ENCODE measurements at regions of chr3 and their contacts with region 1.

Region 1: GRCh38 chr3:120245386-120245785 is 39.6 kb downstream of the GPR156 start:
- DNase-seq: no peak
- H3K4me3 ChIP-seq: no peak overlapping the region
- H3K27ac ChIP-seq: no peak overlapping the region
- H3K4me1 ChIP-seq: no peaks in the 10 kb centered on the region
- H3K27me3 ChIP-seq: no peaks in the 10 kb centered on the region
- CTCF ChIP-seq: no peak

Region 2: GRCh38 chr3:120302361-120302760 is 57.0 kb after region 1 on chr3:
- CTCF ChIA-PET with region 1: no interaction called
- dilution Hi-C with region 1: no loop called
- in situ Hi-C with region 1: no loop called
- intact Hi-C with region 1: loop called (anchors 2 kb)
- DNase-seq: no peak
- H3K4me3 ChIP-seq: no peak overlapping the region
- H3K27ac ChIP-seq: no peak overlapping the region
- H3K4me1 ChIP-seq: no peaks in the 10 kb centered on the region
- H3K27me3 ChIP-seq: no peaks in the 10 kb centered on the region
- CTCF ChIP-seq: no peak

Region 3: GRCh38 chr3:120348981-120349818 is 103.8 kb after region 1 on chr3 and contains the start of gene LRRC58:
- CTCF ChIA-PET with region 1: no interaction called
- dilution Hi-C with region 1: no loop called
- in situ Hi-C with region 1: no loop called
- intact Hi-C with region 1: loop called (anchors 2 kb)
- DNase-seq: peak; percentile 95
- H3K4me3 ChIP-seq: peak within 1 kb of the TSS; percentile 85 to 95 (median 85)
- H3K27ac ChIP-seq: peak within 1 kb of the TSS; percentile 76
- H3K4me1 ChIP-seq: peaks cover 8% of the 10 kb centered on the region
- H3K27me3 ChIP-seq: no peaks in the 10 kb centered on the region
- CTCF ChIP-seq: peak in 1 of 2 donors; percentile 40
- total RNA-seq, gene LRRC58: 21.3 to 28.2 TPM

Region 4: GRCh38 chr3:120404876-120405275 is 159.5 kb after region 1 on chr3:
- CTCF ChIA-PET with region 1: no interaction called
- dilution Hi-C with region 1: no loop called
- in situ Hi-C with region 1: loop called (anchors 5 to 10 kb)
- intact Hi-C with region 1: no loop called
- DNase-seq: peak; percentile 9
- H3K4me3 ChIP-seq: no peak overlapping the region
- H3K27ac ChIP-seq: no peak overlapping the region
- H3K4me1 ChIP-seq: no peaks in the 10 kb centered on the region
- H3K27me3 ChIP-seq: no peaks in the 10 kb centered on the region
- CTCF ChIP-seq: no peak